PC-3 (cell line): ENCODE measurements at regions of chr12 and their contacts with region 1.

Region 1: DNA sequence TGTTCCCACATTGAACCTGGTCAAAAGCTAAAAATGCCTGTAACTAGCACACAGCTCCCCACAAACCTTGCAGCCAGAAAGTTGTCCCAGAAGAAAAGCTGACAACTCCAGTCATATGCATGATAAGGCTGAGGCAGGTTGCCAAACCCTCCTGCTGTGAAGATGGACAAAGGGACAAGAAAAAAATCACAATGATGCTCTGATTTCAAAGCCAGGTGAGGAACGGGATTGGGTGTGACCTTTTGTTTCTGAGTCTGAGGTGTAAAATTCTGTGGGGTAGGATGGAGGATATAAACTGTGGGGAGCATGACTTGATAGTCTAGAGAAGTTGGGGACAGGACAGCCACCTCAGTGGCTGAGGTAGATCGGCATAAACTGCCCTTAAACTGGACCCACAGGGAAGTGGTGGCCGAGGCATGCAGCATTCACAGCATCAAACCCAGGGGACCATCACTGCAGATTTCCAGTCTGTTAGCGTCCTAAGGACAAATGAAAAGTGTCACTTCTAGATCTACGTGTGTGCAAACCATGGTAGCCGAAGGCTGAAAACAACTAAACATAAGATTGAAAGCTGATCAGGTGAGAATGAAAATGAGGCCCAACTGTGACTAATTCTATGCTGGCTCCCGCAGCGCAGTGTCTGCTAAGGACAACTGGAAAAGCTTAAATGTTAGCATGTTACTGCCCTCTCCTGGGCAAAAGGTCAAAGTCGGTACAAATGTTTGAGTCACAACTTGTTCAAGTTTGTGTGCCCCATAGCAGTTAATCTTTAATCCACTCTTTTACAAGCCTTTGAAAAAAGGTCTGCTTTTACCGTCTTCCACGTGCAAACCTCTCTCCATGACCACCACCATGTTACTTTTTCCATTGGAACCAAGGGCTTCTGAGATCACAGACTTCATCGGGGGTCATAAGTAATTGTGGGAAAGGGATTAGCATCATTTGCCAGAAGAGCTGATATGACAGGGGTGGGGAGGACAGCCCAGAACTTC is 39.8 kb downstream of the GRIN2B start:
- DNase-seq: peak; percentile 72
- ATAC-seq: peak; percentile 74
- H3K4me3 ChIP-seq: no peak overlapping the region
- H3K27ac ChIP-seq: no peak overlapping the region
- H3K4me1 ChIP-seq: peaks cover 3% of the 10 kb centered on the region; the same call in 1 of the 2 replicates
- H3K27me3 ChIP-seq: no peaks in the 10 kb centered on the region
- CTCF ChIP-seq: peak; percentile 55

Region 2: DNA sequence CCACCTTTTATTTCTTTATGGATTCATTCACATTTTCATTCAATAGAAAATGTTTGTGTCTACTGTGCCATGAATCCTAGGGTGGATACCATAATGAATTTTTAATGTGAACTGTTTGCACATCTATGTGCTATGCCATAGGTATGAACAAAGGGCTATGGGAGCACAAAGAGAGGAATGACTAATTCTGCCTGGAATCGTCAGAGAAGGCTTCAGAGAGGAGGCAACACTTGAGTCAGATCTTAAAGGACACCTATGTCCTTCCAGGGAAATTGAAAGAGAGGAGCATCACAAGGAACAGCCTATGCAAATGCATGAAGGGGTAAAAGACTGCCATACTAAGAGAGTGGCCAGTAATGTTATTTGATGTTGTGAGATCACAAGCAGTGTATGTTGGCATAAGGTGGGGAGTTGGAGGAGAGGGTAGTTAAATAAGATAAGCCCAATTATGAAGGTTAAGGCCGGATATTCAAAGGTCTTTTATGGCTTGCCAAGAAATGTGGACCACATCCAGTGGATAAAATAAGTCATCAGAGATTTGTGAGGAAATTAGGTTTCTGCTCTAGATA is 206.9 kb before region 1 on chr12:
- CTCF ChIA-PET with region 1: no interaction called
- POLR2A ChIA-PET with region 1: no interaction called
- intact Hi-C with region 1: loop called (anchors 5 kb)
- DNase-seq: peak; percentile 45
- ATAC-seq: no peak
- H3K4me3 ChIP-seq: no peak overlapping the region
- H3K27ac ChIP-seq: no peak overlapping the region
- H3K4me1 ChIP-seq: no peaks in the 10 kb centered on the region
- H3K27me3 ChIP-seq: no peaks in the 10 kb centered on the region
- CTCF ChIP-seq: no peak